K562 (cell line): ENCODE measurements at regions of chr22 and their contacts with region 1.

Region 1: DNA sequence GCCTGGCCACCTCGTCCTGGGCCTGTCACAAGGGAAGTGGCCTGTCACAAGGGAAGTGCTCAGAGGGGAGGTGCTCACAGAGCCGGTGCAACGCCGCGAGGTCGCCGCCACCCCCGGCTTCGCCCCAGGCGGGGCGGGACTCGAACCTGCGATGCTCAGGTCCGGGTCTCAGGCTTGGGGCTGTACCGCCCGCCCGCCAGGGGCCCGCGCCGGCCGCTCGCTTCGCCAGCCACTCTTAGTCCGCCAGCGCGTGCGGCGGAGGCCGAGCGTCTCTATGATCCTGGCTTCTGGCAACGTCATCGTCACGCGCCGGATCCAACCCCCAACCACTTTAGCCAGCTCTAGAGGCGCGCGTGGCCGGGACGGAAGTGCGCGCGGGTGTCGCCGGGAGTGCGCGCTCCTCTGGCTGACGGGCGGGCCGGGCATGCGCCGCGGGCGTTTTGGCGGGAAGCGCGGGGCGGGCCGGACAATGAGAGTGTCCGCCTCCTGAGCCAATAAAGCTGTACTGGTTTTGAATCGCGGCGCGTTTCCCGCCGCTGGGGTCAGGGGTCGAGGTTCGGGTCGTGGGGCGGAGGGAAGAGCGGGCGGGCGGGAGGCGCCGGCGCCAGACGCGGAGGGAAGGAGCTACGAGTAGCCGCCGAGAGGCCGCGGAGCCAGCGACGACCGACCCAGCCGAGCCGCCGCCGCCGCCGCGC is at the start of gene TRMT2A:
- DNase-seq: peak; percentile 100
- ATAC-seq: peak; percentile 88
- H3K4me3 ChIP-seq: peak within 1 kb of the TSS; percentile 63
- H3K27ac ChIP-seq: peak within 1 kb of the TSS; percentile 94
- H3K4me1 ChIP-seq: peaks cover 25 to 90% of the 10 kb centered on the region in 2 experiments
- H3K27me3 ChIP-seq: no peaks in the 10 kb centered on the region
- CTCF ChIP-seq: peak; percentile 56 to 62 (median 57); a peak in 4 of 6 replicates
- EP300 ChIP-seq: peak; percentile 89
- POLR2A ChIP-seq: peak; percentile 90
- RAD21 ChIP-seq: peak in 1 of 2 experiments; percentile 49; a peak in 2 of 4 replicates
- polyA plus RNA-seq, gene TRMT2A: 1.6 to 6.6 TPM

Region 2: DNA sequence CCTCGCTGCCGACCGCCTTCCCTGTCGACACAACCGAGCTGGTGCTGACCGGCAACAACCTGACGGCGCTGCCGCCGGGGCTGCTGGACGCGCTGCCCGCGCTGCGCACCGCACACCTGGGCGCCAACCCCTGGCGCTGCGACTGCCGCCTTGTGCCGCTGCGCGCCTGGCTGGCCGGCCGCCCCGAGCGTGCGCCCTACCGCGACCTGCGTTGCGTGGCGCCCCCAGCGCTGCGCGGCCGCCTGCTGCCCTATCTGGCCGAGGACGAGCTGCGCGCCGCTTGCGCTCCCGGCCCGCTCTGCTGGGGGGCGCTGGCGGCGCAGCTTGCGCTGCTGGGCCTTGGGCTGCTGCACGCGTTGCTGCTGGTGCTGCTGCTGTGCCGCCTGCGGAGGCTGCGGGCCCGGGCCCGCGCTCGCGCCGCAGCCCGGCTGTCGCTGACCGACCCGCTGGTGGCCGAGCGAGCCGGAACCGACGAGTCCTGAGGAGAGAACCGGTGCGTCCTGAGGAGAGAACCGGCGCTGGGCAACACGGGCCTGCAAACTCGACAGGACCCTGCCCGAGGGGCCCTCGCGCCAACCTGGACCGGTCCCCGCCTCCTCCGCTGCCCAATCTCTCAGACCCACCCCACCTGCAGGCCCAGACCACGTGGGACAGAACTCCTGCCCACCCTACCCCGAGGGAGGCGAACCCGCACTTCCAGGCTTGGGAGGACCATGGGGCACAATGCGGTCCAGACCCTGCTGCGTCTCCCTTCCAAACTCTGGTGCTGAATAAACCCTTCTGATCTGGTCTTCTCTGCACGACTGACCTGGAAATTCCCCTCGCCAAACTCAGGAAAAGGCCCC is 392.9 kb before region 1 on chr22:
- CTCF ChIA-PET with region 1: interaction called, 3 read pairs
- POLR2A ChIA-PET with region 1: interaction called, 3 read pairs
- in situ Hi-C with region 1: loop called (anchors 10 kb)
- intact Hi-C with region 1: no loop called
- DNase-seq: peak; percentile 94 to 97 (median 94)
- ATAC-seq: peak; percentile 70
- H3K4me3 ChIP-seq: peak overlapping the region; percentile 55
- H3K27ac ChIP-seq: peak overlapping the region; percentile 88
- H3K4me1 ChIP-seq: peaks cover 45 to 90% of the 10 kb centered on the region in 2 experiments
- H3K27me3 ChIP-seq: no peaks in the 10 kb centered on the region; a peak in 1 of 5 replicates
- CTCF ChIP-seq: peak; percentile 72 to 98 (median 97); a peak in 5 of 6 replicates
- EP300 ChIP-seq: peak; percentile 72
- POLR2A ChIP-seq: no peak
- RAD21 ChIP-seq: peak in 1 of 2 experiments; percentile 93; a peak in 2 of 4 replicates

Region 3: DNA sequence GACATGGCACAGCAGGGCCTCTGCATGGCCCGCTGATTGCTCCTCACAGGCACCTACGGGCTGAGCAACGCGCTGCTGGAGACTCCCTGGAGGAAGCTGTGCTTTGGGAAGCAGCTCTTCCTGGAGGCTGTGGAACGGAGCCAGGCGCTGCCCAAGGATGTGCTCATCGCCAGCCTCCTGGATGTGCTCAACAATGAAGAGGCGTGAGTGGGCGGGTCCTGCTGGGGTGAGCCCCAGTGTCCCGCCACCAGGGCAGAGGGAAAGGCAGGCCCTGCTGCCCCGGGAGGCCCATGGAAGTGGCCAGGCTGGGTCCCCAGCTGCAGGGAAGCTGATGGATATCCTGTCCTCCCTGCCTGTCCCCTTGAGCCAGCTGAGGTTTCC is 55.6 kb before region 1 on chr22:
- CTCF ChIA-PET with region 1: no interaction called
- POLR2A ChIA-PET with region 1: interaction called, 16 read pairs
- in situ Hi-C with region 1: no loop called
- intact Hi-C with region 1: loop called (anchors 1 kb)
- DNase-seq: no peak
- ATAC-seq: no peak
- H3K4me3 ChIP-seq: no peak overlapping the region
- H3K27ac ChIP-seq: no peak overlapping the region
- H3K4me1 ChIP-seq: peaks cover 28 to 85% of the 10 kb centered on the region in 2 experiments
- H3K27me3 ChIP-seq: no peaks in the 10 kb centered on the region
- CTCF ChIP-seq: no peak
- EP300 ChIP-seq: no peak
- POLR2A ChIP-seq: no peak
- RAD21 ChIP-seq: no peak

Region 4: DNA sequence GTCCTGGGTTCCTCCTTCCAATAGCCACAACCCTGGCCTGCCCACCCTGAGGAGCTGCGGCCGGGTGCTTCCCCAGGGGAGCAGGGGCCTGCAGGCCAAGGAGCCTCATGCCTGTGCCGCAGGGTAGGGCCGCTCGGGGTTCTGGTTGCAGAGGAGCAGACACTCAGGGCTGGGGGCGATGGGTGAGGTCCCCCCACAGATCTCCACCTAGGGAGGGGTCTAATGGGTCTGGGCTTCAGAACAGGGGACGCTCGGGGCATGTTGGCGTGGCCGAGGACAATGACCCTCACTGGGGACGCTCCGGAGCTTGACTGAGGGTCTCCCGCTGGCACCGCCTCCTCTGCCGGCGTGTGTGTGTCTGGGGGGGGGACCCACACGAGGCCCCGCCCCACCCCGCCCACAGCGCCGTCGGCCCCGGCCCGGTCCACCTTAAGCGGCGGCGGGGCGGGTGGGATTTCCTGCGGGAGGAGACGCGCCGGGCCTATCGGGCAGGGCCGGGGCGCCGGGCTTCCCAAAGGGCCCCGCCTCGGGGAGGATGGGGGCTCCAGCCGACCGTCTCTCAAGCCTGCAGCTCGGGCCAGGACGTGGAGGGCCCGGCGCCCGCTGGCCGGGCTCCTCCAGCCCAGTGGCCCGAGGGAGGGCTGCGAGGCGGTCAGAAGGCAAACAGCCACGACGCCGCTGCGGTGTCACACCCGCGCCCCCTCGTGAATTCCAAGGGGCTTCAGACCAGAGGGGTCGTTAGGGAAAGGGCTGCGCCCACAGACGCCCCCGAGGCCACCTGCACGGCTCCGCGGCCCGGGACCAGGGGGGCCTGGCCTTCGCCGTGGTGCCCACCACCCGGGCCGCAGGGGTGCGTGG is 13.9 kb after region 1 on chr22:
- CTCF ChIA-PET with region 1: interaction called, 3 read pairs
- POLR2A ChIA-PET with region 1: interaction called, 212 read pairs
- in situ Hi-C with region 1: no loop called
- intact Hi-C with region 1: loop called (anchors 1 kb)
- DNase-seq: peak; percentile 95 to 100 (median 98)
- ATAC-seq: peak; percentile 79
- H3K4me3 ChIP-seq: peak overlapping the region; percentile 62
- H3K27ac ChIP-seq: peak overlapping the region; percentile 20; the same call in 2 of the 3 replicates
- H3K4me1 ChIP-seq: peaks cover 11 to 79% of the 10 kb centered on the region in 2 experiments
- H3K27me3 ChIP-seq: no peaks in the 10 kb centered on the region
- CTCF ChIP-seq: no peak
- EP300 ChIP-seq: no peak
- POLR2A ChIP-seq: no peak
- RAD21 ChIP-seq: no peak

Region 5: DNA sequence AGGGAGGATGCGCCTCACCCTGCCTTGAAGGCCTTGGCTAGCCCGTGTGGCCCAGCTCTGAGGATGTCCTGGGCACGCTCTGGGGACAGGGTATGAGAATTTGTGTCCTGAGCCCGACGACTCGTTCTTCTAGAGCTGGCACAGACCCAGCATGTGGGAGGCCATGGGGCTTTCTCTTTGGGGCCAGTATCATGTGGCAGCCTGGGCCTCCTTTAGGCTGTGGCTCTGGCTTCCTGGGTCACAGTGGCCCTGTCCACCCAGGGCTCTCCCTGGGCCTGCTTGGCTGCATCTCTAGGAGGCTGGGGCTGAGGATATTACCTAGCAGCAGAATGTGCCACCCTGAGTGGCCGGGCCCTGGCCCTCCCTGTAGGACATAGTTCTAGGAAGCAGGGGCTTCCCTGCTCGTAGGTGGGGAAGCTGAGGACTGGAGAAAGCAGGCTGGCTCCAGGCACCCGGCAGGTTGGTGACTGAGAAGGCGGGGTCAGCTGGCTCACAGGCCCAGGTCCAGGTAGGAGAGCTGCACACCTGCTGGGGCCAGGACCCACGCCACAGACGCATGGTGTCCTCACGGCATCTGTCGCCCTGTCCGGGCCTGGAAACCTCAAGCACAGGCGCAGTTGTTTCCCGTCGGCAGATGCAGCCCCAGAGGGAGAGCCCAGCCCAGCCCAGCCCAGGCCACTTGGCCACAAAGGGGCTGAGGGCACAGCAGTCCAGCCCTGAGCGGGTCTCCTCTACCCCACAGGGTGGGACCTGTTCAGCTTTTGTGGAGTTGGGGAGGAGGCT is 27.0 kb after region 1 on chr22:
- CTCF ChIA-PET with region 1: no interaction called
- POLR2A ChIA-PET with region 1: interaction called, 10 read pairs
- in situ Hi-C with region 1: no loop called
- intact Hi-C with region 1: no loop called
- DNase-seq: no peak
- ATAC-seq: no peak
- H3K4me3 ChIP-seq: no peak overlapping the region
- H3K27ac ChIP-seq: no peak overlapping the region
- H3K4me1 ChIP-seq: peaks cover 0 to 88% of the 10 kb centered on the region in 2 experiments; a peak in 2 of 5 replicates
- H3K27me3 ChIP-seq: no peaks in the 10 kb centered on the region
- CTCF ChIP-seq: no peak
- EP300 ChIP-seq: no peak
- POLR2A ChIP-seq: no peak
- RAD21 ChIP-seq: no peak